AG04449 (cell line): ENCODE measurements at regions of chr15 and their contacts with region 1.

Region 1: DNA sequence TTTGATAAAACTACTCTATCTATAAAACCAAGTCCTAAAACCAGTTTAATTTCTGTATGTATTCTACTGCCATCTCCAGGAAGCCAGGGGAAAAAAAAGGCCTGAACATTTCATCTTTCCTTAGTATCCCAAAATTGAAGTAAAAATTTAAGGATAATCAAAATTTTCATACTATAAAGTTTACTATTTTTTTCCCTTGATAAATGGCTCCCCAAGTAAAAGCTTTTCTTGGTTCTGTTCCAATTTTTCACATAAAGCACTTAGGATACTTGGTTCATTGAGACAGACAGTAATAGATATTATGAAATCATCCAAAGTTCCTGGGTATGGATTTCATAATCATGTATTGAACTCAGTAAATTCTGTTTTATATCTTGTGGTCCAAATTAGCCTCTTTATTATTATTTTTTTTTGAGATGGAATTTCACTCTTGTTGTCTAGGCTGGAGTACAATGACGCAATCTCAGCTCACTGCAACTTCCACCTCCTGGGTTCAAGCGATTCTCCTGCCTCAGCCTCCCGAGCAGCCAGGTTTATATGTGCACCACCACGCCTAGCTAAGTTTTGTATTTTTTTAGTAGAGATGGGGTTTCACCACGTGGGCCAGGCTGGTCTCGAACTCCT is 34.5 kb downstream of the ICE2 start:
- DNase-seq: no peak
- H3K4me3 ChIP-seq: no peak overlapping the region
- CTCF ChIP-seq: peak; percentile 35

Region 2: DNA sequence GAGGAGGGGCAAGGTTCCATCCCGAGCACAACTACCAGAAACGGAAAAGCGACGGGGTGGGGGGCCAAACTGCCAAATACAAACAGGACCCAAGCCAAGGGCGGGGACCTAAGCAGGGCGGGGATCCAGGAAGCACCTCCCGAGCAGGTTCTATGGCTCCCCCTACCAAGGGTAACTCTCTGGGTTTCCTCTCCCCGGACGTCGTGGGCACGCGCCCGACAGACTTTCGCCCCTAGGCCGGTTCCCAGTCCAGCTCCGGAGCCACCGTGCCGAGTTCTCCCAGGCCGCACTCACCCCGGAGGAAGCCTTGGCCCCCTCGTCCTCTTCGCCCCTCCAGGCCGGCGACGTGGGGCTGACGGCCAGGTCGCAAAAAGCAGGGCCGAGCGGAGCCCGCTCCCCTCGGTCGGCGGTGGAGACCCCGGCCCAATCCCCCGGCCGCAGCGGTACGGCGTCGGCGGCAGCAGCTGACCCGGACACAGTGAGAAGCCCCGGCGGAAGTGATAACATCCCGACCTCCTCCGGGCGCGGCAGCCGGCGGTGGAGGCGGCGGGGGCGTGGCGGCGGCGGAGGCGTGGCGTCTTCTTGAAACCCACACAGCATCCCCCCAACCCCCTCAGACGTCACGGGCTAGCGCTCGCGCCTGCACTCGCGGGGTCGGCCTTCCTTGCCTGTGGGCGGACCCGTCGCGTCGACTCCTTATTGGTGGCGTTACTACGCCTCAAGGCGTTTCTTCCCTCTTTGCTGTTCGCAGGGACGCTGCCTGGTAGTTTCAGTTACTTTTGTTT is 755.4 kb before region 1 on chr15 and contains the start of gene BNIP2:
- CTCF ChIA-PET with region 1: interaction called, 17 read pairs
- POLR2A ChIA-PET with region 1: no interaction called
- DNase-seq: peak; percentile 83
- H3K4me3 ChIP-seq: peak within 1 kb of the TSS; percentile 96
- CTCF ChIP-seq: no peak

Region 3: DNA sequence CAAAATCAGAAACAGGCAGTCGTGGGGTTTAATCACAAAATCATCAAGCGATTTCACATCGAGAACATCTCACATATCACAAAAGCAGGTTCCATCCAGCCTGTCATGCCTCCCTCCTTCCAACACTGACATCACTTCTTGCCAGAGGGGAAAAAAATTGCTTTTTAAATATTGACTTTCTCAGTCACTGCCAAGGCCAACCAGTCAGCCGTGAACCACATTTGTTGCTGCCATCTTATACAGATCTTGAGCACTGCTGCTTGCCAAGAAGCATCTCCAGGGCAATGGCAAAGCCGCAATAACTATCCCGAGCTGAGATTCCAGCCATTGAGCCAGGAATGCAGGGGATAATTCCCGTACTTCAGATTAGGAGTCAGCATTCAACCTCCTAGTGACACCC is 221.2 kb before region 1 on chr15:
- CTCF ChIA-PET with region 1: no interaction called
- POLR2A ChIA-PET with region 1: no interaction called
- DNase-seq: no peak
- H3K4me3 ChIP-seq: no peak overlapping the region
- CTCF ChIP-seq: no peak

Region 4: GRCh38 chr15:60340207-60340921 is 104.0 kb before region 1 on chr15:
- CTCF ChIA-PET with region 1: interaction called, 10 read pairs
- POLR2A ChIA-PET with region 1: interaction called, 4 read pairs
- DNase-seq: no peak
- H3K4me3 ChIP-seq: no peak overlapping the region
- CTCF ChIP-seq: peak; percentile 14

Region 5: DNA sequence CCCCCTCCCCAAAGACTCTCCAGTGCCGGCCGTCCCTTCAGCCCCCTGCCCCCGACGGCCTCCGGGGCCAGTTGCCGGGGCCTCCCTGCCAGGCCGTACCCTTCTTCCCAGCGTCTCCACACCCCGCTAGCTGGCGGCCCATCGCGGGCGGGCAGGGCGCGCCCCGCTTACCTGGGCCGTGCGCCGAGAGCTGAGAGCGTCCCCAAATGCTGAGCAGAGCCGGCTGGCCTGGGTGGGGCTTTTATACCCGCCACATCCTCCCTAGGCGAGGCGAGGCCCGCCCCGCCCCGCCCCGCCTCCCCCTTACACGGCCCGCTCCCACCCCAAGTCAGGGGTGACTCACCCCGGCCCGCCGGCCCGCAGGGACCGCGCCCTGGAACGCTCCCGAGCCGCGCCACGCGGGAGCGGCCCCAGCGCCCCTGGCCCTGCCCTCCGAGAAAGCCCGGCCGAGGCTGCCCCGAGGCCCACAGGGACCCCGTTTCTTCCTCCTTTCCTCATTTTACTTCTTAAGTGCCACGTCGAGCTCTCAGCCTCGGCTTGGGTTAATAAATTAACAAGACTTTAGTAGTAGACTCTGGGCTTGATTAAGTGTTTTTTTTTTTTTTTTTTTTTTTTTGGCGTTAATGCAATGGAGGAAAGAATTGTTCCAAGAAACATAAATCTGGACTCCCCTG is 46.5 kb before region 1 on chr15 and contains the start of gene ANXA2:
- CTCF ChIA-PET with region 1: interaction called, 20 read pairs
- POLR2A ChIA-PET with region 1: interaction called, 40 read pairs
- DNase-seq: no peak
- H3K4me3 ChIP-seq: peak within 1 kb of the TSS; percentile 73
- CTCF ChIP-seq: no peak

Region 6: DNA sequence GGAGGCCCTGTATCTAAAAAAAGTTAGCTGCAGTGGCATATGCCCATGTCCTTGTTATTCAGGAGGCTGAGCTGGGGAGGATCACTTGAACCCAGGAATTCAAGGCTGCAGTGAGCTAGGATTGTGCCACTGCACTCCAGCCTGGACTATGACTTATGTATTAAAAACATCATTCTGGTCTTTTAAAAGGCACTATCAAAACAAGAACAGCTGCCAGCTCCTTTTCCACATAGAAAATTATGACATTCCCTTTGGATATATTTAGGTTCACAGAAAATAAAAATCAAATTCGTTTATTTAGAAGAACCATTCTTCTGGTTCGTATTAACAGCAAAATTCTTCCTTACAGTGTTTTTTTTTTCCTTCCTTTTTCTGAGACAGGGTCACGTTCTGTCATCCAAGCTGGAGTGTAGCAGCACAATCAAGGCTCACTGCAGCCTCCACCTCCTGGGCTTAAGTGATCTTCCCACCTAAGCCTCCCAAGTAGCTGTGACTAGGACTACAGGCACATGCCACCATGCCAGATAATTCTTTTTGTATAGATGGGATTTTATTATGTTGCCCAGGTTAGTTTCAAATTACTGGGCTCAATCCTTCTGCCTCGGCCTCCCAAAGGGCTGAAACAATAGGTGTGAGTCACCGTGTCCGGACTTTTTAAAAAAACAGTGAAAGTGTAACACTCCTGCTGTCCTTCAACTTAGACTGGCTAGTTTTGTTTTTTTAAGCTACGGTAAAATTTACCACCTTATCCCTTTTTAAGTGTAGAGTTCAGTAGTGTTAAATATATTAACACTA is 20.6 kb after region 1 on chr15:
- CTCF ChIA-PET with region 1: interaction called, 10 read pairs
- POLR2A ChIA-PET with region 1: no interaction called
- DNase-seq: no peak
- H3K4me3 ChIP-seq: no peak overlapping the region
- CTCF ChIP-seq: no peak